Heart right ventricle (tissue), 16 donors: ENCODE measurements at regions of chr17 and their contacts with region 1.

Region 1: GRCh38 chr17:63911657-63912426 is 784 bp upstream of the CSHL1 start:
- DNase-seq: peak in 1 of 2 donors; percentile 45
- ATAC-seq: peak in 6 of 8 donors; percentile 47 to 72 (median 66)
- H3K4me3 ChIP-seq: no peak overlapping the region
- H3K27ac ChIP-seq: no peak overlapping the region
- H3K4me1 ChIP-seq: no peaks in the 10 kb centered on the region
- H3K27me3 ChIP-seq: peaks cover 0 to 14% (median 8%) of the 10 kb centered on the region in 7 donors
- CTCF ChIP-seq: peak; percentile 74 to 87 (median 82)

Region 2: DNA sequence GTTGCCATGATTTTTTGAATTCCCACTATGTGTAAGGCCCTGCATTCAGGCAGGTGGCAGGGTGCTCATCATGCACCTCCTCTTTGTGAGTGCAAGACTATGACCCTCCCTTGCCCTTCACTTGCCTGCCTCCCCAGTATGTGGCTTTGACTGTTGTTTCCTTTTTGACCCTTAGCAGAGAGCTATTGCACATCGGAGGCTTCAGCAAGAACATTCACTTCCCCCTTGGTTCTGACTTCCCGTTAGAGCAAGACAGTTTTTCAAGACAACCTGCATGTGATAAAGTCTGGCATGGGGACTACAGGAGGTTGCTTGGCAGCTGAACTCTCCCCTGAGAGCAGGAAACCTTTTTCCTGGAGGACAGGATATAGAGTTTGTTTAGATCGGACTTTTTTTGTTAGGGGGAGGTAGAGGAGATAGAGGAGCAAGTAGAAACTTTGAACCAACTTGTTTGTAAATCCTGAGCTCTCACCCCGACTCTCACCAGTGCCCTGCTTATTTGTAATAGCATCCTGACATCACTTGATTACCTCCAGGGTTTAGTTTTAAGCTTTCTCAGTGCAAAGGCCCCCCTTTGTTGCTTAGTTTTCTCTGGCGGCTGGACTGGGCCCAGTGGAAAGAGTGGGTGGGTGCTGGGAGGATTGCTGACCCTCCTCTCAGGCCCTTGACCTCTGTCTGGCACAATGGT is 246.2 kb before region 1 on chr17:
- intact Hi-C with region 1: no loop called
- DNase-seq: peak in 1 of 2 donors; percentile 38
- ATAC-seq: peak; percentile 68 to 89 (median 83)
- H3K4me3 ChIP-seq: no peak overlapping the region
- H3K27ac ChIP-seq: peak overlapping the region in 7 of 10 donors; percentile 12 to 85 (median 36)
- H3K4me1 ChIP-seq: peaks cover 0 to 46% (median 23%) of the 10 kb centered on the region in 9 donors
- H3K27me3 ChIP-seq: no peaks in the 10 kb centered on the region
- CTCF ChIP-seq: no peak

Region 3: GRCh38 chr17:63946440-63947367 is 34.9 kb after region 1 on chr17:
- intact Hi-C with region 1: no loop called
- DNase-seq: peak; percentile 35 to 54
- ATAC-seq: peak in 7 of 8 donors; percentile 70 to 81 (median 77)
- H3K4me3 ChIP-seq: no peak overlapping the region
- H3K27ac ChIP-seq: peak overlapping the region in 2 of 10 donors; percentile 29 to 36
- H3K4me1 ChIP-seq: peaks cover 0 to 20% (median 2%) of the 10 kb centered on the region in 9 donors
- H3K27me3 ChIP-seq: peaks cover 0 to 7% (median 0%) of the 10 kb centered on the region in 7 donors
- CTCF ChIP-seq: peak; percentile 64 to 89 (median 83)

Region 4: GRCh38 chr17:64145757-64146417 is 234.0 kb after region 1 on chr17:
- intact Hi-C with region 1: loop called in 1 of 10 experiments (anchors 5 kb)
- DNase-seq: peak; percentile 94 to 98
- ATAC-seq: peak; percentile 95 to 97 (median 96)
- H3K4me3 ChIP-seq: peak overlapping the region; percentile 64 to 94 (median 76)
- H3K27ac ChIP-seq: peak overlapping the region; percentile 85 to 99 (median 96)
- H3K4me1 ChIP-seq: peaks cover 6 to 45% (median 38%) of the 10 kb centered on the region in 9 donors
- H3K27me3 ChIP-seq: no peaks in the 10 kb centered on the region
- CTCF ChIP-seq: peak in 2 of 9 donors; percentile 9 to 28